Caco-2 (cell line): ENCODE measurements at regions of chr4 and their contacts with region 1.

Region 1: DNA sequence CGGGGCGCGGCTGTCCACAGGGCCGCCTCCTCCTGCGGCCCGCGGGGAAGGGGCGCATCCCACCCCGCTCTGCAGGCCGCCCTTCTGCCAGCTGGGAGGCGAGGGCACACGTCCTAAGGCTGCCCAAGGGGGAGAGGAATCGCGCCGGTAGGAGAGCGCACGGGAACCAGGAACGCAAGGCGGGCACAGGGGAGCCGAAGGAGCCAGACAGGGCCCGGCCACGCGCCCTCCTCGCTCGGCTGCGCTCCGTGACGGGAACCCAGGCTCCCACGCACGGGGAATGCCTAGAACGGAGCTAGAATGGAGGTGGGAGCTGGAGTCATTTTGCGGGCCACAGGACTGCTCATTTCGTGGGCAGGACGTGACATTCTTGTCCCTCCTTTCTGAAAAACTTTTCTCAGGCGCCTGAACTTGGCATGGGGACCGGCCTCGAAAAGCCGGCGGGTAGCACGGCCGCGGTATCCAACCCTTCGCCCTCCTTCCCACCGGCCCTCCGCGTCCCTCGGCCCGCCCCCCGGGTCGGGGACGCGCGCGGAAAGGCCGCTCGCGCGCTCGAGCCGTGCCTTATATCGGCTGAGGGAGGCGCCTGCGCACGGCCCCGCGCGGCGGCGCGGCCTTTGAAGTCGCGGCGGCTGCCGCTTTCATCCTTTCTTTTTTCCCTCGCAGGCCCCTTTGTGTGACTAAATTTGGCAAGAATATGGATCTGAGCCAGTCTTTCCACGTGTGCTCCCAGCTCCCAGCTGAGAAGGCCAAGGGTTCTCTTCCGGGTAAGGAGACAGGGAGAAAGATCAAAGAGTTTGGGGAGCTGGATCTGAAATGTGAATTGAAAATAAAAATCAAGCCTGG is 4.2 kb upstream of the LEF1 start:
- DNase-seq: peak; percentile 72 to 81
- H3K4me3 ChIP-seq: peak overlapping the region; percentile 52
- H3K4me3 Mint-ChIP-seq: peak overlapping the region; percentile 70
- H3K27ac Mint-ChIP-seq: peak overlapping the region; percentile 69
- H3K4me1 ChIP-seq: peaks cover 10% of the 10 kb centered on the region
- H3K4me1 Mint-ChIP-seq: peaks cover 10% of the 10 kb centered on the region
- H3K27me3 ChIP-seq: no peaks in the 10 kb centered on the region; the same call in 1 of the 2 replicates
- H3K27me3 Mint-ChIP-seq: peaks cover 16% of the 10 kb centered on the region
- CTCF ChIP-seq: no peak

Region 2: GRCh38 chr4:108018040-108018883 is 154.7 kb before region 1 on chr4:
- CTCF ChIA-PET with region 1: no interaction called
- POLR2A ChIA-PET with region 1: no interaction called
- intact Hi-C with region 1: loop called (anchors 10 kb)
- DNase-seq: peak; percentile 69 to 76
- H3K4me3 ChIP-seq: no peak overlapping the region
- H3K4me3 Mint-ChIP-seq: no peak overlapping the region
- H3K27ac Mint-ChIP-seq: no peak overlapping the region
- H3K4me1 ChIP-seq: no peaks in the 10 kb centered on the region
- H3K4me1 Mint-ChIP-seq: no peaks in the 10 kb centered on the region
- H3K27me3 ChIP-seq: no peaks in the 10 kb centered on the region
- H3K27me3 Mint-ChIP-seq: no peaks in the 10 kb centered on the region
- CTCF ChIP-seq: peak; percentile 69 to 70

Region 3: DNA sequence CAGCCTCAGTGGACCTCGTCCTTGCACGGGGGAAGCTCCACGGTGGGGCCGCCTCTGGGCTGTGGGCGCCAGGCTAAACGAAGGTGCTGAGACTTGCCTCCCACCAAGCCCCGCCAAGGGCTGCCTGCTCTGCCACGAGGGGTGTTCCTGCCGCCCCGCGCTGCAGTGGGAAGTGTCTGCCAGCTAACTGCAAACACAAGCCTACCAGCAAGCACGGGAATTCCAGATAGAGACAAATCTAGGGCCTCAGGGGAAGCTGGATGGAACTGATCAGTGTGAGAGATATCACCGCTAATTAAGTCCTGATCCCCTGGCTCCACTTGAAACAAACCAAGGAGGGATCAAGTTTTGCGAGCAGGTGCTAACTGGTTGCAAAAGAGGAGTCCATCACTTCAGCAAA is 177.4 kb after region 1 on chr4:
- CTCF ChIA-PET with region 1: no interaction called
- POLR2A ChIA-PET with region 1: no interaction called
- intact Hi-C with region 1: loop called (anchors 5 kb)
- DNase-seq: no peak
- H3K4me3 ChIP-seq: no peak overlapping the region
- H3K4me3 Mint-ChIP-seq: no peak overlapping the region
- H3K27ac Mint-ChIP-seq: no peak overlapping the region
- H3K4me1 ChIP-seq: peaks cover 28% of the 10 kb centered on the region
- H3K4me1 Mint-ChIP-seq: peaks cover 20% of the 10 kb centered on the region
- H3K27me3 ChIP-seq: no peaks in the 10 kb centered on the region
- H3K27me3 Mint-ChIP-seq: no peaks in the 10 kb centered on the region
- CTCF ChIP-seq: no peak

Region 4: GRCh38 chr4:108446556-108446955 is 273.6 kb after region 1 on chr4:
- CTCF ChIA-PET with region 1: no interaction called
- POLR2A ChIA-PET with region 1: interaction called, 5 read pairs
- intact Hi-C with region 1: loop called (anchors 5 kb)
- DNase-seq: peak; percentile 79 to 93
- H3K4me3 ChIP-seq: no peak overlapping the region
- H3K4me3 Mint-ChIP-seq: peak overlapping the region; percentile 35
- H3K27ac Mint-ChIP-seq: peak overlapping the region; percentile 39
- H3K4me1 ChIP-seq: peaks cover 31% of the 10 kb centered on the region
- H3K4me1 Mint-ChIP-seq: peaks cover 9% of the 10 kb centered on the region
- H3K27me3 ChIP-seq: no peaks in the 10 kb centered on the region
- H3K27me3 Mint-ChIP-seq: no peaks in the 10 kb centered on the region
- CTCF ChIP-seq: no peak

Region 5: GRCh38 chr4:108492816-108493595 is 320.0 kb after region 1 on chr4:
- CTCF ChIA-PET with region 1: no interaction called
- POLR2A ChIA-PET with region 1: no interaction called
- intact Hi-C with region 1: loop called (anchors 5 kb)
- DNase-seq: peak in 1 of 2 experiments; percentile 30
- H3K4me3 ChIP-seq: no peak overlapping the region
- H3K4me3 Mint-ChIP-seq: no peak overlapping the region
- H3K27ac Mint-ChIP-seq: no peak overlapping the region
- H3K4me1 ChIP-seq: no peaks in the 10 kb centered on the region
- H3K4me1 Mint-ChIP-seq: no peaks in the 10 kb centered on the region
- H3K27me3 ChIP-seq: no peaks in the 10 kb centered on the region
- H3K27me3 Mint-ChIP-seq: no peaks in the 10 kb centered on the region
- CTCF ChIP-seq: peak; percentile 37 to 55

Region 6: DNA sequence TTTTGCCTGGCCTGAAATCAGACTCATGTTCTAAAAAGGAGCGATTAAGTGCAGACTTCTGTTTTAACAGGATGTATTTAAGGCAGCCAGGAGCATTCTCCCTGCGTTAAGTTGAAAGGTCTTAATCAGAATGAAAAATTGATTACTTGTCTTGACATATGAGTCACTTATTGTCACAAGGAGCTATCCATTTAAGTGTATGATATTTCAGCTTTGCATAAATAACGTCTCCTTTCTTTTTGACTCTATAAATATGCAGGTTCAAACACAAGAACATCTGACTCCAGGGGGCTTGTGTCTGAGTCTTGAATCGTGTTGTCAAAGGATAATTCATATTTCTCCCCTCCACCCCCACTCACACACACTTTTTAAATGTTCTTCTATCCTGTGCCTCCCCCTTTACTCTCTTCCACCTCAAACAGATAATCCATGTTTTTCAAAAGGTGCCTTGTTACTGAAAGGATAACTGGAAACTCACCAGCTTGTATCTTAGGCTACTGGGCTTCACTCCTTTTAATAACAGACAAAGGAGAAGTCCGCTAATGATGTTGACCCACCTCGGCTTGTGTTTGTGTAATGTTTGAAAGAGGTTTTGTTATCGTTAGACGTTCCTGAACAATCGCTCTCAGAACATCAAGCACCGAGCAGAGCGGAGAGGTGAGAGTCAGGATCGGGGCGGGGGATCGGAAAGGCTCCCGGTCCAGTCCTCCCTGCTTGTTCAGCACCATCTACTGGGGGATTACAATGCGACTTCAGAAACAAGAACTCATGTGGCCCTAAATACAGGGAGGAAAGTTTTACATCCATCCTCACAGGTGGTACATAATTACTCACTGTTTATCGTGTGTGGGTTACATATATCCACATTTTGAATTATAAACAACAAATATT is 339.9 kb after region 1 on chr4:
- CTCF ChIA-PET with region 1: no interaction called
- POLR2A ChIA-PET with region 1: no interaction called
- intact Hi-C with region 1: loop called (anchors 5 kb)
- DNase-seq: peak; percentile 63 to 65
- H3K4me3 ChIP-seq: no peak overlapping the region
- H3K4me3 Mint-ChIP-seq: peak overlapping the region; percentile 47
- H3K27ac Mint-ChIP-seq: no peak overlapping the region
- H3K4me1 ChIP-seq: no peaks in the 10 kb centered on the region
- H3K4me1 Mint-ChIP-seq: no peaks in the 10 kb centered on the region
- H3K27me3 ChIP-seq: no peaks in the 10 kb centered on the region
- H3K27me3 Mint-ChIP-seq: peaks cover 13% of the 10 kb centered on the region
- CTCF ChIP-seq: peak; percentile 35 to 58